ENCODE measurements at regions of chrX and their contacts with region 1.

Region 1: GRCh38 chrX:71107762-71108360 is 1.3 kb upstream of the CXorf65 start:
- DNase-seq: no peak
- H3K4me3 ChIP-seq: no peak overlapping the region
- H3K27ac ChIP-seq: no peak overlapping the region
- H3K4me1 ChIP-seq: no peaks in the 10 kb centered on the region
- H3K27me3 ChIP-seq: no peaks in the 10 kb centered on the region
- CTCF ChIP-seq: no peak
- POLR2A ChIP-seq: no peak

Region 2: GRCh38 chrX:71067722-71068048 is 40.2 kb before region 1 on chrX:
- intact Hi-C with region 1: loop called (anchors 2 kb)
- DNase-seq: no peak
- H3K4me3 ChIP-seq: peak overlapping the region; percentile 48 to 64
- H3K27ac ChIP-seq: peak overlapping the region; percentile 85 to 86
- H3K4me1 ChIP-seq: no peaks in the 10 kb centered on the region
- H3K27me3 ChIP-seq: no peaks in the 10 kb centered on the region
- CTCF ChIP-seq: no peak
- POLR2A ChIP-seq: no peak